ENCODE measurements at regions of chr6 and their contacts with region 1.

Region 1: GRCh38 chr6:148451690-148452089 is 109.1 kb downstream of the SASH1 start:
- DNase-seq: no peak
- H3K4me3 ChIP-seq: no peak overlapping the region
- H3K27ac ChIP-seq: no peak overlapping the region
- H3K4me1 ChIP-seq: no peaks in the 10 kb centered on the region
- H3K27me3 ChIP-seq: no peaks in the 10 kb centered on the region
- CTCF ChIP-seq: no peak
- POLR2A ChIP-seq: no peak

Region 2: GRCh38 chr6:148263010-148263409 is 188.7 kb before region 1 on chr6:
- intact Hi-C with region 1: loop called (anchors 10 kb)
- DNase-seq: no peak
- H3K4me3 ChIP-seq: no peak overlapping the region
- H3K27ac ChIP-seq: no peak overlapping the region
- H3K4me1 ChIP-seq: no peaks in the 10 kb centered on the region
- H3K27me3 ChIP-seq: no peaks in the 10 kb centered on the region
- CTCF ChIP-seq: no peak
- POLR2A ChIP-seq: no peak